Activated CD4-positive, alpha-beta T cell treated with anti-CD3 and anti-CD28 coated beads, Interleukin-2, amount 10 ng/mL, durations not matched to agents 7 days and 5 days (primary cell): ENCODE measurements at regions of chr3 and their contacts with region 1.

Region 1: GRCh38 chr3:17014709-17015108 is 130.0 kb downstream of the PLCL2 start:
- DNase-seq: no peak
- H3K4me3 Mint-ChIP-seq: no peak overlapping the region
- H3K27ac Mint-ChIP-seq: no peak overlapping the region
- H3K4me1 Mint-ChIP-seq: peaks cover 1% of the 10 kb centered on the region
- H3K27me3 Mint-ChIP-seq: no peaks in the 10 kb centered on the region

Region 2: GRCh38 chr3:16993227-16993626 is 21.5 kb before region 1 on chr3:
- CTCF ChIA-PET with region 1: no interaction called
- POLR2A ChIA-PET with region 1: no interaction called
- DNase-seq: no peak
- H3K4me3 Mint-ChIP-seq: no peak overlapping the region
- H3K27ac Mint-ChIP-seq: no peak overlapping the region
- H3K4me1 Mint-ChIP-seq: peaks cover 33% of the 10 kb centered on the region
- H3K27me3 Mint-ChIP-seq: no peaks in the 10 kb centered on the region

Region 3: GRCh38 chr3:17025594-17026139 is 11.0 kb after region 1 on chr3:
- CTCF ChIA-PET with region 1: interaction called, 12 read pairs
- POLR2A ChIA-PET with region 1: no interaction called
- DNase-seq: no peak
- H3K4me3 Mint-ChIP-seq: no peak overlapping the region
- H3K27ac Mint-ChIP-seq: no peak overlapping the region
- H3K4me1 Mint-ChIP-seq: peaks cover 64% of the 10 kb centered on the region
- H3K27me3 Mint-ChIP-seq: no peaks in the 10 kb centered on the region